ENCODE measurements at regions of chr14 and their contacts with region 1.

Region 1: DNA sequence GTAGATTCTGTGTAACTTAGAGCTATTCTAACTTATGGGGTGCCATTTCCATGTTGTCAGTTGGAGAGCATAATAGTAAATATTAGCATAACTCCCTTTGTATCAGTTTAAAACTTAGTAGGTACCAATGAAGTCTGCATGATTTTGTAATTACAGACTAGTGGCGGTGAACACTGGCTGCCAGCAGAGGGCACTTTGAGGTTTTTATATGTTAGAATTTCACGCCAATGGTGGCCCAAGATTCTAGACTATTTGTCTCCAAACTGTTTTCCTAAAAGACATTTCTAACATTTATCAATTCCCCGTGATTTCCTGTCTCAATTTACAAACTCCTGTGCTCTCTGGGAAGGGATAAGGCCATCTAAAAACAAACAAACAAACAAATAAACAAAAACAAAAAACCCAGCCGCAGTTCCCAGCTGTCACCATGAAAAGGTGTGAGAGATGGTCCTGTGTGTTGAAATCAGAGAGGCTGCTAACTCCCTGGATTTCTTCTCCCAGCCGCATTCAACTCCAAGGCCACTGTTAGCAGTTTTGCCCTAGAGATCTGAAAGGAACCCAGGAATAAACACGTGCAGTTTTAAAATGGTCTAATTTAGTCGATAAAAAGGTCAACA is 57.6 kb downstream of the BRMS1L start:
- DNase-seq: no peak
- ATAC-seq: peak; percentile 76
- H3K4me3 ChIP-seq: no peak overlapping the region
- H3K27ac ChIP-seq: no peak overlapping the region
- H3K4me1 ChIP-seq: 0 out of 2 replicates have a peak, but pooled peaks cover 4% of the 10 kb centered on the region
- H3K27me3 ChIP-seq: no peaks in the 10 kb centered on the region
- CTCF ChIP-seq: peak; percentile 65 to 80 (median 72)
- EP300 ChIP-seq: no peak
- POLR2A ChIP-seq: no peak
- RAD21 ChIP-seq: peak; percentile 55; the same call in 1 of the 2 replicates

Region 2: DNA sequence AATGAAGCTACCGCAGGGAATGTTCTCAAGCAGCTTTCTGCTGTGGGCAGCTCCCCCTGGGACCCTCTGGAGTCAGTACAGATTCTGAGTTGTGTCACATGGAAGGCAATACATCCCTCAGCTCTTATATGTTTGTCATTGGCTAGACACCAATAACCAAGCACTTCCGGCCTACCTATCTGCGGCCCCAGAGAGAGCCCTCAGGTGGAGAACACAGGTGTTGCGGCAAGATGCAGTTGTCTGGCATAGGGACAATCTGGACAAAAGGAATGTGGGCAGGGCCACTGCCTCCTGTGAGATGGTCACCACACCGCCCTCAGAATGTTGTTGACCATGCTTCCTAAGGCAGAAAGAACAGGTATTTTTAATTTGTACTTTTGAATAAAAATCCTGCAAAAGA is 61.1 kb after region 1 on chr14:
- CTCF ChIA-PET with region 1: interaction called, 23 read pairs
- POLR2A ChIA-PET with region 1: no interaction called
- RAD21 ChIA-PET with region 1: interaction called, 3 read pairs
- SMC1A ChIA-PET with region 1: interaction called, 12 read pairs
- in situ Hi-C with region 1: no loop called
- intact Hi-C with region 1: loop called (anchors 5 kb)
- DNase-seq: no peak
- ATAC-seq: peak; percentile 73
- H3K4me3 ChIP-seq: no peak overlapping the region
- H3K27ac ChIP-seq: no peak overlapping the region
- H3K4me1 ChIP-seq: no peaks in the 10 kb centered on the region
- H3K27me3 ChIP-seq: no peaks in the 10 kb centered on the region
- CTCF ChIP-seq: peak; percentile 24 to 49 (median 36)
- EP300 ChIP-seq: no peak
- POLR2A ChIP-seq: no peak
- RAD21 ChIP-seq: peak; percentile 46

Region 3: DNA sequence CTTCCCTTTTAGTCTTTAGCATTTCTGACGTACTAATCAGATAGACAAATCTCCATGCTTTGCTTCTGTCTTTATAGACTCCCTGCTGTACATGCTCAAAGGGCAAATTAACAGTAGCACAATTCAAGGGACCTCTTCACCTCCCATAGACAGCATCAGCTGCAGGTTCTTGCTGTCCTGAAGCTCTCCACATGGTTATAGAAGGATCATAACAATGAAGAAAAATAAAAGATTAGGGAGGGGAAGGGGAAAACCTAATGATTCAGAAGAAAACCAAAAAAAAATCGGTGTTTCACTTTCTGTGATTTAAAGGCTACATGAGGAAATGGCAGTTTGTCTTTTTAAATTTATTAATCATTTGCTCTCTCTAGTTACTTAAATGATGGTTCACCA is 137.2 kb after region 1 on chr14:
- CTCF ChIA-PET with region 1: interaction called, 16 read pairs
- POLR2A ChIA-PET with region 1: no interaction called
- RAD21 ChIA-PET with region 1: no interaction called
- SMC1A ChIA-PET with region 1: no interaction called
- in situ Hi-C with region 1: no loop called
- intact Hi-C with region 1: no loop called
- DNase-seq: peak; percentile 23
- ATAC-seq: peak; percentile 76
- H3K4me3 ChIP-seq: no peak overlapping the region
- H3K27ac ChIP-seq: no peak overlapping the region
- H3K4me1 ChIP-seq: peaks cover 14% of the 10 kb centered on the region
- H3K27me3 ChIP-seq: no peaks in the 10 kb centered on the region
- CTCF ChIP-seq: no peak
- EP300 ChIP-seq: no peak
- POLR2A ChIP-seq: no peak
- RAD21 ChIP-seq: no peak

Region 4: GRCh38 chr14:36373982-36374673 is 490.3 kb after region 1 on chr14:
- CTCF ChIA-PET with region 1: interaction called, 10 read pairs
- POLR2A ChIA-PET with region 1: no interaction called
- RAD21 ChIA-PET with region 1: interaction called, 13 read pairs
- SMC1A ChIA-PET with region 1: interaction called, 10 read pairs
- in situ Hi-C with region 1: no loop called
- intact Hi-C with region 1: loop called (anchors 5 kb)
- DNase-seq: peak; percentile 30
- ATAC-seq: peak; percentile 99
- H3K4me3 ChIP-seq: no peak overlapping the region
- H3K27ac ChIP-seq: no peak overlapping the region
- H3K4me1 ChIP-seq: no peaks in the 10 kb centered on the region
- H3K27me3 ChIP-seq: no peaks in the 10 kb centered on the region
- CTCF ChIP-seq: peak; percentile 84 to 90 (median 89)
- EP300 ChIP-seq: 0 out of 4 replicates have a peak, but pooled peaks of 1 of the 2 experiments have one; percentile 36
- POLR2A ChIP-seq: no peak
- RAD21 ChIP-seq: peak; percentile 81